ENCODE measurements at regions of chr4 and their contacts with region 1.

Region 1: DNA sequence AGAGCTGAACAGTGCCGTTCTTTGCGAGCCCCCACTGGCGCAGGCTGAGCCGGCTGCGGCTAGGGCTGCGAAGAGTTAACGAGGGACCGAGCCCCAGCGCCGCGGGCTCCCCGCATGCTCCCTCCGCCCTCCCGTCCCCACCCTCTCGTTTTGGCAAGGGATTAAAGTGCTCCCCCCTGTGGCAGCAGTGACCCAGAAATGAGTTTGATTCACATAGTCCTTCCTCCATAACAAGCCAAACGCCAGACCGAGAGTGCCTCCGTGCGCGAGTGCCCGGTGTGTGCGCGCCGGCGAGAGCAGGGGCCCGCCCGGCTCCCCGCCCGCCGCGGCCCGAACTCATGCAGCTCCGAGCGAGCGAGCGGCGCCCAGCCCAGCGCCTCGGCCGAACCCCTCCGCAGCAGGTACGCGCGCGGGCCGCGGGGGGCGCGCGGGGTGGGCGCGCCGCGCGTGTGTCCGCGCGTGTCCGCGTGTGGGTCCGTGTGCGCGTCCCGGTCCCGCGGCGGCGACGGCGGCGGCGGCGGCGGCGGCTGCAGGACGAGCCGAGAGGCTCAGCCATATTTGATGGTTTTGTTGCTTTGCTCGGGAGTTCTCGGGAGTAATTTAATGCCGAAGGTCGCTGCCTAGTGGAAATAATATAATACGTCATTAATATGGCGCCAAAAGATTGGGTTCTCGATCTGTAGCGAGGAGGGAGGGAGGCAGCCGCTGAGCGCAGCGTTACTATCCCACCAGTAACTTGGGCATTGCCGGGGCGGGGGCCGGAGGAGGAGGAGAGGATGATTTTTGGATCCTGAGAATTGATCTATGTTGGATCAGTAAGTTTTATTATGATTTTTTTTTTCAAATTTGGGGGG is at the start of gene JADE1:
- DNase-seq: peak; percentile 96
- H3K4me3 ChIP-seq: peak within 1 kb of the TSS; percentile 77
- H3K27ac ChIP-seq: peak within 1 kb of the TSS; percentile 75
- H3K4me1 ChIP-seq: peaks cover 16% of the 10 kb centered on the region
- H3K27me3 ChIP-seq: no peaks in the 10 kb centered on the region
- CTCF ChIP-seq: peak; percentile 69
- total RNA-seq, gene JADE1: 39.3 and 40.8 TPM in 2 replicates

Region 2: GRCh38 chr4:127875791-127876190 is 933.9 kb before region 1 on chr4:
- CTCF ChIA-PET with region 1: no interaction called
- POLR2A ChIA-PET with region 1: no interaction called
- intact Hi-C with region 1: loop called (anchors 5 kb)
- DNase-seq: no peak
- H3K4me3 ChIP-seq: no peak overlapping the region
- H3K27ac ChIP-seq: no peak overlapping the region
- H3K4me1 ChIP-seq: peaks cover 6% of the 10 kb centered on the region
- H3K27me3 ChIP-seq: no peaks in the 10 kb centered on the region
- CTCF ChIP-seq: no peak

Region 3: GRCh38 chr4:128287871-128288688 is 521.6 kb before region 1 on chr4:
- CTCF ChIA-PET with region 1: no interaction called
- POLR2A ChIA-PET with region 1: interaction called, 3 read pairs
- intact Hi-C with region 1: loop called (anchors 5 kb)
- DNase-seq: peak; percentile 99
- H3K4me3 ChIP-seq: peak overlapping the region; percentile 84
- H3K27ac ChIP-seq: peak overlapping the region; percentile 97
- H3K4me1 ChIP-seq: no peaks in the 10 kb centered on the region
- H3K27me3 ChIP-seq: no peaks in the 10 kb centered on the region
- CTCF ChIP-seq: no peak

Region 4: DNA sequence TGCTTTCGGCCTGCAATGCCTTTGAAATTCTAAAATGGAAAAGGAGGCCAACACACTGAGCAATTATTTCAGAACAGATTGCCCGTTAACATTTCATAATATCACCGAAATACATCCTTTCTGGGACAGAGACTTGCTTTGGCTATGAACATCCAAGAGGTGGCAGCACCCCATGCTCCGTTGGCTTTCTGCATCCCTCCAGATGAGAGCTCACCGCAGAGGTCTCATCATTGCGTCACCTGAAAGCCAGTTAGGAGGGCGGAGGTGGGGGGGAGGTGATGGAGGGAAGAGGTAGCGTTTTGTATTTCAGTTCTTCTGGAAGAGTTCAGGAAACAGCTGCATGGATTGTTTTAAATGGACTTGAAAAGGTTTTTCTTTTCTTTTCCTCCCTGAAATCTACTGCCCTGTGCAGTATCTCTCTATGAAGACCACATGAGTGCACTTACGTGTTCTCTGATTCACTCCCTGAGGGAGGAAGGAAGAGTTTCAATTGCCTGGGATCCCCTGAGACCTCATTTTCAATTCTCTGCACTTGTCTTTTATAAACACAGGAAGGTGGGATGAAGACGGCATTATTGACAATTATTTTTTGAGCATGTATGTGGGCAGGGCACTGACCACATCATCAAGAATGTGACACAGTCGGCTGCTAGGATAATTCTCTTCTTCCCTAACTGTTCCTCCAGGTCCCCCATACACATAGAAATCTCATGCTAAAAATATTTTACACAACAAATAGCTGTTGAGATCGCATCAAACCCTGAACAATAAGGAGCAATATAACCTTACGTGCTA is 355.2 kb before region 1 on chr4:
- CTCF ChIA-PET with region 1: interaction called, 3 read pairs
- POLR2A ChIA-PET with region 1: no interaction called
- intact Hi-C with region 1: loop called (anchors 1 kb)
- DNase-seq: peak; percentile 88
- H3K4me3 ChIP-seq: no peak overlapping the region
- H3K27ac ChIP-seq: no peak overlapping the region
- H3K4me1 ChIP-seq: no peaks in the 10 kb centered on the region
- H3K27me3 ChIP-seq: no peaks in the 10 kb centered on the region
- CTCF ChIP-seq: peak; percentile 84

Region 5: GRCh38 chr4:128574706-128575105 is 235.0 kb before region 1 on chr4:
- CTCF ChIA-PET with region 1: no interaction called
- POLR2A ChIA-PET with region 1: no interaction called
- intact Hi-C with region 1: loop called (anchors 1 kb)
- DNase-seq: peak; percentile 72
- H3K4me3 ChIP-seq: no peak overlapping the region
- H3K27ac ChIP-seq: no peak overlapping the region
- H3K4me1 ChIP-seq: no peaks in the 10 kb centered on the region
- H3K27me3 ChIP-seq: no peaks in the 10 kb centered on the region
- CTCF ChIP-seq: peak; percentile 78

Region 6: GRCh38 chr4:128615197-128615596 is 194.5 kb before region 1 on chr4:
- CTCF ChIA-PET with region 1: no interaction called
- POLR2A ChIA-PET with region 1: no interaction called
- intact Hi-C with region 1: no loop called
- DNase-seq: no peak
- H3K4me3 ChIP-seq: no peak overlapping the region
- H3K27ac ChIP-seq: no peak overlapping the region
- H3K4me1 ChIP-seq: no peaks in the 10 kb centered on the region
- H3K27me3 ChIP-seq: no peaks in the 10 kb centered on the region
- CTCF ChIP-seq: no peak

Region 7: DNA sequence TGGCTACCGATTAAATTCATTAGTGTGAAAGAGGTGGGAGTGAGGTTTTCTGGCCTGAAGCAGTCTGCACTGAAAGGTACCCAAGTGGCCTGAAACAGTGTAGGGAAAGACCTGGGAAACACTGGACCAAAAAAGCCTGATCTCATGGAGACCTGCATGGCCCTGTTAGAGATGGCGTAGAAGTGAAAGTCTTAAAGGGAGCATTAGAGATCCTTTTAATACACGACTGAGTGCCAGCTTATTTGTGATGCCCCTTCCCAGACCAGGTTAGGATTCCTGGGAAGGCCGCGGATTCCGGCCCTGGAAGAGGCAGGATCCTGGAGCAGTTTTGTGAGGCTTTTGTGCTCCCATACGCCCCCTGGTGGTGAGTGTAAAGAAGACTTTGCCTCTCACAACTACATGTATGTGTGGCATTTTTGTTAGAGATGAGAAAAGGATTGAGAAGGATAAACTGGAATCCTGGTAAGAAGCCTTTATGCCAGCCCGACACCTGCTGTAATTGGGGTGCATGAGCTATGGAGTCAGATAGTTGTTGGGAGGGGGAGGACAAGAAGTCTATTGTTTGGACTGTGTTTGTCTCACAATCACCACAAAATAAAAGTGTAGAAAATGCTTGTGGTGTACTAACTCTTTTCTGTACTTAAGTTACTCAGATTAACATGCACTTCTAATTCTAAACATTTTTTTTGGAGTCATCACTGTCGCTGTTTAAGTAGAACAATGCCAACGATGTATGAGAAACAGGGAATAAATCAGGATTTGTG is 53.8 kb after region 1 on chr4:
- CTCF ChIA-PET with region 1: no interaction called
- POLR2A ChIA-PET with region 1: no interaction called
- intact Hi-C with region 1: loop called (anchors 1 kb)
- DNase-seq: peak; percentile 75
- H3K4me3 ChIP-seq: no peak overlapping the region
- H3K27ac ChIP-seq: no peak overlapping the region
- H3K4me1 ChIP-seq: no peaks in the 10 kb centered on the region
- H3K27me3 ChIP-seq: no peaks in the 10 kb centered on the region
- CTCF ChIP-seq: peak; percentile 90

Region 8: DNA sequence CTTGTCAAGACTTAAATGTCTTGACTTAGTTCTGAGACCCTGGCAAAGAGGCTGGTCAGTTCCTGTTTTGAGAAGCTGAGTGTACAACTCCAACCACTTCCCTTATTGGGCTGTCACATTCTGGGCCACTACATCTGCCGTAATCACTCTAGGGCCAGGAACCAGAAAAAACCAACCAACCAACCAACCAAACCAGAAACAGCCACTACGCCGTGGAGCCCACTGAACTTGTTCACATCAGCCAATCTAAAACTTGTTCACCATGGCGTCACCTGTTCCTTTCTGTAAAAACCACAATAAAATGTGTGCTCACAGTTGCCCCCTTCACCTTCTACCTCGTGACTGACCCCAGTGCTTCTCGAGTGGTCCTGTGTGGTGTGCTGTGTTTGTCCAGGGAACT is 107.1 kb after region 1 on chr4:
- CTCF ChIA-PET with region 1: no interaction called
- POLR2A ChIA-PET with region 1: no interaction called
- intact Hi-C with region 1: no loop called
- DNase-seq: no peak
- H3K4me3 ChIP-seq: no peak overlapping the region
- H3K27ac ChIP-seq: no peak overlapping the region
- H3K4me1 ChIP-seq: no peaks in the 10 kb centered on the region
- H3K27me3 ChIP-seq: no peaks in the 10 kb centered on the region
- CTCF ChIP-seq: no peak

Region 9: GRCh38 chr4:129093191-129093920 is 283.7 kb after region 1 on chr4 and contains the start of gene SCLT1:
- CTCF ChIA-PET with region 1: no interaction called
- POLR2A ChIA-PET with region 1: no interaction called
- intact Hi-C with region 1: loop called (anchors 5 kb)
- DNase-seq: peak; percentile 98
- H3K4me3 ChIP-seq: peak within 1 kb of the TSS; percentile 73
- H3K27ac ChIP-seq: peak within 1 kb of the TSS; percentile 84
- H3K4me1 ChIP-seq: peaks cover 13% of the 10 kb centered on the region
- H3K27me3 ChIP-seq: no peaks in the 10 kb centered on the region
- CTCF ChIP-seq: no peak
- total RNA-seq, gene SCLT1: 24.1 and 26.7 TPM in 2 replicates

Measured in A673 (cell line).